ENCODE measurements at regions of chr6 and their contacts with region 1.

Region 1: DNA sequence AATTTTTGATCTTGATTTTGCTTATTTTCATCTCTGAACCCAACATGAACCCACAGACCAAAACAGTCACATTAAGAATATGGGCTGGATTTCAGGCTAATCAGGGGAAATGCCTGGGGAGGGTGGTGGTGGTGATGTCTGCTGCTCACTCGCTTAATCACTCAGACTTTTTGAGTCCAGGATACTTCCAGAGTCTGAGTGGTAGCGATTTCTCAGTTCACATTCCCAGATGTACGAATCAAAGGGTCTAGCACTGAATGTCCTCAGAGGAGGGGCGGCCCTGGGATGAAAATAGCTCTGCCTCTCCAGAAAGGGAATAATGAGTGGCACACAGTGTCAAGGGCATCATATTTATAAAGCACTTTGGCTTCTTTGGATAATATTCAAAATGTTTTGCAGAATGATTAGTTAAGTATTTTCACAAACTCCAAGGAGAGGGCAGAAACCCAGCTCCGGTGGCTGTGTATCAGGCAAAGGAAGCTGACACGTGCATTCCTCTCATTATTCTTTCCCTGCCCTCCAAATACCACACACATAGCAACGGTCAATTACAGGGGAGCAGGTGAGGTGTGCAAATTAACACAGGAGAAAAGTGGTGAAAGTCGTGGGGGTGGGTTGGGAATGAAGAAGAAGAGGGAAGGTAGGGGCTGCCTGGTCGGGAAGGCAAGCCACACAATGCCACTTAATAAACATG is 345.2 kb upstream of the RSPO3 start:
- DNase-seq: no peak
- H3K4me3 Mint-ChIP-seq: no peak overlapping the region
- H3K27ac Mint-ChIP-seq: no peak overlapping the region
- H3K4me1 Mint-ChIP-seq: no peaks in the 10 kb centered on the region
- H3K27me3 Mint-ChIP-seq: no peaks in the 10 kb centered on the region
- CTCF ChIP-seq: no peak

Region 2: DNA sequence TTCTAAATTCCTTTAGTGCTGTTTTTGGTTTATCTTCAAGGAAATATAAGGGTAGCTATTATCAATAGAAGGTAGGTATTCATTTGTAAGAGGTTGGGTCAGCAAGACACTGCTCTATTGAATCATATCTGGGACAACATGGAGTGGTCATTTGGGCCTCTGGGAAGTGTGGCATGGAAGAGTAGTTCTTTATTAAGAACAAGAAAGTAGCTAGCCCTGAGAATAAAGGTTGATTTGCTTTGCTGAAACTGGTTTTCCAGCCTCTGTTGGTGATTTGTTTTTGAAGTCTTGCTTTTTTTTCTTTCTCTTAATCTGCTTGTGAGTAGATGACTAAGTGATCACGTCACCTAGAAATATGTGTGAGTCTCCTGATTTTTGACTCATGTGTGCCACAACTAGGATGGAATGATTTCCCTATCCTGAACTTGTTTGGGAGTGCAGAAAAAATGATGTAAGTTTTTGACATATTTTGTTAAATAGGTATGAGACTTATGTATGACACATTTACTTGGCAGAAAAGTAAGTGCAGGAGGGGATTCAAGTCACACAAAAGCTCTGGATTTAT is 51.6 kb before region 1 on chr6:
- CTCF ChIA-PET with region 1: no interaction called
- intact Hi-C with region 1: no loop called
- DNase-seq: peak; percentile 34
- H3K4me3 Mint-ChIP-seq: peak overlapping the region; percentile 46
- H3K27ac Mint-ChIP-seq: peak overlapping the region; percentile 99
- H3K4me1 Mint-ChIP-seq: peaks cover 21% of the 10 kb centered on the region
- H3K27me3 Mint-ChIP-seq: no peaks in the 10 kb centered on the region
- CTCF ChIP-seq: no peak

Region 3: GRCh38 chr6:126743076-126743475 is 30.2 kb before region 1 on chr6:
- CTCF ChIA-PET with region 1: interaction called, 12 read pairs
- intact Hi-C with region 1: no loop called
- DNase-seq: no peak
- H3K4me3 Mint-ChIP-seq: no peak overlapping the region
- H3K27ac Mint-ChIP-seq: no peak overlapping the region
- H3K4me1 Mint-ChIP-seq: peaks cover 7% of the 10 kb centered on the region
- H3K27me3 Mint-ChIP-seq: no peaks in the 10 kb centered on the region
- CTCF ChIP-seq: no peak

Region 4: DNA sequence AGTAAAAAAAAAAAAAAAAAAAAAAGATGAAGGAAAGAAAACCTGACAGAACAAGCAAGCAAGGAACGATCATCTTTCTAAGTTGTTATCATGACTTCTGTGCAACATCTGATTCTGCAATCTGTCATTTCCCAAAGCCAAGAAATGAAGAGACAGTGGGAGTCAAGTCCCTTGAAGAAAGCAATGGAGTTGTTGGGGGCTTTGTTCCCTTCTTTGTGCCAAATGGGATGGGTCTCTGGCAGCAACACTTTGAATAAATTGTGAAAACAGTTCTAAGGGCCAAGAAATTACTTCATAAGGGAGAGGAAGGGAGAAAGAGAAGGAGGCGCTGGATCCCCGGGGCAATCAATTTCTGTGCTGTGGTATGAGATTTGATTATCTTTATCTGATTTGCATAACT is 311.9 kb after region 1 on chr6:
- CTCF ChIA-PET with region 1: no interaction called
- intact Hi-C with region 1: no loop called
- DNase-seq: no peak
- H3K4me3 Mint-ChIP-seq: no peak overlapping the region
- H3K27ac Mint-ChIP-seq: no peak overlapping the region
- H3K4me1 Mint-ChIP-seq: no peaks in the 10 kb centered on the region
- H3K27me3 Mint-ChIP-seq: no peaks in the 10 kb centered on the region
- CTCF ChIP-seq: no peak